ENCODE measurements at regions of chr5 and their contacts with region 1.

Region 1: GRCh38 chr5:67636091-67636490 is 439.5 kb upstream of the CD180 start:
- DNase-seq: peak; percentile 48 to 70
- ATAC-seq: peak; percentile 42 to 89 (median 74)
- H3K4me3 ChIP-seq: no peak overlapping the region
- H3K27ac ChIP-seq: peak overlapping the region in 3 of 10 donors; percentile 23 to 47 (median 46)
- H3K4me1 ChIP-seq: peaks cover 0 to 30% (median 13%) of the 10 kb centered on the region in 9 donors
- H3K27me3 ChIP-seq: no peaks in the 10 kb centered on the region
- CTCF ChIP-seq: no peak

Region 2: GRCh38 chr5:67268231-67269021 is 367.7 kb before region 1 on chr5:
- intact Hi-C with region 1: loop called in 1 of 10 experiments (anchors 5 kb)
- DNase-seq: peak; percentile 61 to 83
- ATAC-seq: peak; percentile 79 to 90 (median 86)
- H3K4me3 ChIP-seq: peak overlapping the region in 5 of 10 donors; percentile 6 to 27 (median 18)
- H3K27ac ChIP-seq: peak overlapping the region; percentile 65 to 88 (median 77)
- H3K4me1 ChIP-seq: peaks cover 11 to 39% (median 29%) of the 10 kb centered on the region in 9 donors
- H3K27me3 ChIP-seq: no peaks in the 10 kb centered on the region
- CTCF ChIP-seq: no peak

Region 3: GRCh38 chr5:67679184-67679841 is 43.2 kb after region 1 on chr5:
- intact Hi-C with region 1: no loop called
- DNase-seq: no peak
- ATAC-seq: no peak
- H3K4me3 ChIP-seq: no peak overlapping the region
- H3K27ac ChIP-seq: no peak overlapping the region
- H3K4me1 ChIP-seq: peaks cover 0 to 10% (median 0%) of the 10 kb centered on the region in 9 donors
- H3K27me3 ChIP-seq: no peaks in the 10 kb centered on the region
- CTCF ChIP-seq: no peak

Measured in heart right ventricle (tissue), 16 donors.